GM12878 (cell line): ENCODE measurements at regions of chr1 and their contacts with region 1.

Region 1: GRCh38 chr1:178501705-178502329 is 5.1 kb upstream of the CLEC20A start:
- DNase-seq: peak; percentile 1
- ATAC-seq: peak; percentile 94
- H3K4me3 ChIP-seq: no peak overlapping the region
- H3K27ac ChIP-seq: no peak overlapping the region
- H3K4me1 ChIP-seq: no peaks in the 10 kb centered on the region
- H3K27me3 ChIP-seq: no peaks in the 10 kb centered on the region
- CTCF ChIP-seq: peak; percentile 81 to 96 (median 91)
- EP300 ChIP-seq: no peak
- POLR2A ChIP-seq: no peak
- RAD21 ChIP-seq: peak; percentile 63

Region 2: DNA sequence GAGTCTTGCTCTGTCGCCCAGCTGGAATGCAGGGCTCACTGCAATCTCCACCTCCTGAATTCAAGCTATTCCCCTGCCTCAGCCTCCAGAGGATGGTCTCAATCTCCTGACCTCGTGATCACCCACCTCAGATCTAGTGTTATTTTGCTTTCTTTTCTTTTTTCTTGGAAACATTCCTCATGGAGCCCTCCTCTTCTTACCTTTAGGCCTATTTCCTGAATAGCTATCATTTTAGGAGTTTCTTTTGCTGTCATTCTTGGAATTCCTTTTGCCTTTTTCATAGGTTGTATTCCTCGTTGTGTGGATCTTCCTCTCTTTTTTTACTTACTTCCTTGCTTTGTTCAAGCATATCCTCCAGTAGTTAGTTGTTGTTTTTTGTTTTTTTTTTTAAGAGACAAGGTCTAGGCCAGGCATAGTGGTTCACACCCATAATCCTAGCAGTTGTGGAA is 234.1 kb before region 1 on chr1:
- CTCF ChIA-PET with region 1: no interaction called
- POLR2A ChIA-PET with region 1: no interaction called
- RAD21 ChIA-PET with region 1: no interaction called
- SMC1A ChIA-PET with region 1: no interaction called
- in situ Hi-C with region 1: no loop called
- intact Hi-C with region 1: no loop called
- DNase-seq: no peak
- ATAC-seq: no peak
- H3K4me3 ChIP-seq: no peak overlapping the region
- H3K27ac ChIP-seq: no peak overlapping the region
- H3K4me1 ChIP-seq: no peaks in the 10 kb centered on the region
- H3K27me3 ChIP-seq: no peaks in the 10 kb centered on the region
- CTCF ChIP-seq: no peak
- EP300 ChIP-seq: no peak
- POLR2A ChIP-seq: no peak
- RAD21 ChIP-seq: no peak

Region 3: GRCh38 chr1:178300352-178300699 is 201.5 kb before region 1 on chr1:
- CTCF ChIA-PET with region 1: interaction called, 36 read pairs
- POLR2A ChIA-PET with region 1: no interaction called
- RAD21 ChIA-PET with region 1: interaction called, 3 read pairs
- SMC1A ChIA-PET with region 1: interaction called, 18 read pairs
- in situ Hi-C with region 1: no loop called
- intact Hi-C with region 1: no loop called
- DNase-seq: no peak
- ATAC-seq: no peak
- H3K4me3 ChIP-seq: no peak overlapping the region
- H3K27ac ChIP-seq: no peak overlapping the region
- H3K4me1 ChIP-seq: no peaks in the 10 kb centered on the region
- H3K27me3 ChIP-seq: no peaks in the 10 kb centered on the region
- CTCF ChIP-seq: no peak
- EP300 ChIP-seq: no peak
- POLR2A ChIP-seq: no peak
- RAD21 ChIP-seq: no peak

Region 4: GRCh38 chr1:178310685-178311105 is 191.1 kb before region 1 on chr1:
- CTCF ChIA-PET with region 1: interaction called, 187 read pairs
- POLR2A ChIA-PET with region 1: no interaction called
- RAD21 ChIA-PET with region 1: interaction called, 19 read pairs
- SMC1A ChIA-PET with region 1: interaction called, 73 read pairs
- in situ Hi-C with region 1: loop called (anchors 5 kb)
- intact Hi-C with region 1: loop called (anchors 1 kb)
- DNase-seq: peak; percentile 20
- ATAC-seq: peak; percentile 81
- H3K4me3 ChIP-seq: no peak overlapping the region
- H3K27ac ChIP-seq: no peak overlapping the region
- H3K4me1 ChIP-seq: no peaks in the 10 kb centered on the region
- H3K27me3 ChIP-seq: no peaks in the 10 kb centered on the region
- CTCF ChIP-seq: peak; percentile 57 to 71 (median 69)
- EP300 ChIP-seq: no peak
- POLR2A ChIP-seq: no peak
- RAD21 ChIP-seq: peak; percentile 64

Region 5: GRCh38 chr1:178344513-178345082 is 157.2 kb before region 1 on chr1:
- CTCF ChIA-PET with region 1: interaction called, 16 read pairs
- POLR2A ChIA-PET with region 1: no interaction called
- RAD21 ChIA-PET with region 1: no interaction called
- SMC1A ChIA-PET with region 1: no interaction called
- in situ Hi-C with region 1: no loop called
- intact Hi-C with region 1: no loop called
- DNase-seq: peak; percentile 1
- ATAC-seq: peak; percentile 90
- H3K4me3 ChIP-seq: no peak overlapping the region
- H3K27ac ChIP-seq: no peak overlapping the region
- H3K4me1 ChIP-seq: no peaks in the 10 kb centered on the region
- H3K27me3 ChIP-seq: no peaks in the 10 kb centered on the region
- CTCF ChIP-seq: peak; percentile 35 to 46 (median 42); a peak in 5 of 6 replicates
- EP300 ChIP-seq: no peak
- POLR2A ChIP-seq: no peak
- RAD21 ChIP-seq: 0 out of 2 replicates have a peak, but pooled peaks have one; percentile 18

Region 6: GRCh38 chr1:178361841-178362240 is 140.0 kb before region 1 on chr1:
- CTCF ChIA-PET with region 1: interaction called, 33 read pairs
- POLR2A ChIA-PET with region 1: no interaction called
- RAD21 ChIA-PET with region 1: interaction called, 5 read pairs
- SMC1A ChIA-PET with region 1: interaction called, 12 read pairs
- in situ Hi-C with region 1: no loop called
- intact Hi-C with region 1: loop called (anchors 1 kb)
- DNase-seq: no peak
- ATAC-seq: peak; percentile 87
- H3K4me3 ChIP-seq: no peak overlapping the region
- H3K27ac ChIP-seq: no peak overlapping the region
- H3K4me1 ChIP-seq: no peaks in the 10 kb centered on the region
- H3K27me3 ChIP-seq: no peaks in the 10 kb centered on the region
- CTCF ChIP-seq: peak; percentile 31 to 56 (median 39); a peak in 4 of 6 replicates
- EP300 ChIP-seq: no peak
- POLR2A ChIP-seq: no peak
- RAD21 ChIP-seq: no peak; the same call in 1 of the 2 replicates

Region 7: GRCh38 chr1:178371235-178371634 is 130.6 kb before region 1 on chr1:
- CTCF ChIA-PET with region 1: interaction called, 12 read pairs
- POLR2A ChIA-PET with region 1: no interaction called
- RAD21 ChIA-PET with region 1: no interaction called
- SMC1A ChIA-PET with region 1: interaction called, 10 read pairs
- in situ Hi-C with region 1: no loop called
- intact Hi-C with region 1: no loop called
- DNase-seq: no peak
- ATAC-seq: no peak
- H3K4me3 ChIP-seq: no peak overlapping the region
- H3K27ac ChIP-seq: no peak overlapping the region
- H3K4me1 ChIP-seq: no peaks in the 10 kb centered on the region
- H3K27me3 ChIP-seq: no peaks in the 10 kb centered on the region; a peak in 1 of 4 replicates
- CTCF ChIP-seq: no peak
- EP300 ChIP-seq: no peak
- POLR2A ChIP-seq: no peak
- RAD21 ChIP-seq: no peak

Region 8: GRCh38 chr1:178470411-178470960 is 31.3 kb before region 1 on chr1:
- CTCF ChIA-PET with region 1: interaction called, 15 read pairs
- POLR2A ChIA-PET with region 1: no interaction called
- RAD21 ChIA-PET with region 1: interaction called, 5 read pairs
- SMC1A ChIA-PET with region 1: no interaction called
- in situ Hi-C with region 1: no loop called
- intact Hi-C with region 1: no loop called
- DNase-seq: no peak
- ATAC-seq: no peak
- H3K4me3 ChIP-seq: no peak overlapping the region
- H3K27ac ChIP-seq: no peak overlapping the region
- H3K4me1 ChIP-seq: no peaks in the 10 kb centered on the region
- H3K27me3 ChIP-seq: no peaks in the 10 kb centered on the region
- CTCF ChIP-seq: no peak
- EP300 ChIP-seq: no peak
- POLR2A ChIP-seq: no peak
- RAD21 ChIP-seq: no peak